A549 (cell line): ENCODE measurements at regions of chr11 and their contacts with region 1.

Region 1: DNA sequence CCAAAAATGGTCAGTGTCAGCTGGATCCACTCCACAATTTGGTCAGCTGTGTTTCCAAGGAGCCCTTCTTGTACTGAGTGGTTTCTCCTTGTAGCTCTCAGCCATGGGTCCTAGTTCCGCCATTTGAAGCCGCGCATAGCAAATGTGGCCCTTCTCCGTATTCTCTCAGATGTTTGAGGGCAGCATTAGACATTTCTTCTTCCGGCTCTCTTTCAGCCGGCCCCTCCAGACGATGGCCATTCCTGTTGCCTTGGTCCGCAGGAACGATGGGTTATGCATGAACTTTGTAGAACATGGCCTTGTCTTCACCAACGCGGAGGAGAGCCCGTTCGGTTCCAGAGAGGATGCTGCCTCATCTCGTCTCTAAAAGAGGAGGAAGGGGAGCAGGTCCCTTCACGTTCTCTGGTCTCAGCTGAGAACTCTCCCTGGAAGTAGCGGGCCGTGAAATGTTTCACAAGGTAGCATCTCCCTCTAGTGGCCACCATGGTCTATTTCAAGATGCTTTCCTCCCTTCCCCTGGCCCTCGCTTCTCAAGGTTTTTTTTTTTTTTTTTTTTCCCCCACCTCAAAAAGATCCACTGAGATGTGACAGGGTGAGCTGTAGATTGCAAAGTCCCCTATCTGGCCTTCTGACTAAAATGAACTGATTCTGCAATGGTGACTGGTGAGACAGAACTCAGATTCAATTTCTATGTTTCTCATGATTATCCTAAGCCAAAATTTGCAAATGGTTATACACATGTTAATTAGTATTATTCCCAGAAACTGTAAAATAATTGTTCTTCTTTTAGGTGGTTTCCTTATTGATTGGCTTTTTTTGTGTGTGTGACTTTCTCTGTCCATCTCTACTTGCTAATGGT is 19.8 kb upstream of the PLET1 start:
- DNase-seq: peak; percentile 68 to 79
- ATAC-seq: peak; percentile 86 to 96
- H3K4me3 ChIP-seq: peak overlapping the region; percentile 52
- H3K27ac ChIP-seq: peak overlapping the region; percentile 66 to 78
- H3K4me1 ChIP-seq: no peaks in the 10 kb centered on the region
- CTCF ChIP-seq: peak; percentile 45
- EP300 ChIP-seq: no peak
- POLR2A ChIP-seq: no peak
- RAD21 ChIP-seq: peak; percentile 60 to 75

Region 2: GRCh38 chr11:112231952-112232351 is 48.5 kb before region 1 on chr11:
- CTCF ChIA-PET with region 1: interaction called, 247 read pairs
- POLR2A ChIA-PET with region 1: no interaction called
- DNase-seq: no peak
- ATAC-seq: no peak
- H3K4me3 ChIP-seq: no peak overlapping the region
- H3K27ac ChIP-seq: no peak overlapping the region
- H3K4me1 ChIP-seq: peaks cover 12% of the 10 kb centered on the region
- CTCF ChIP-seq: no peak
- EP300 ChIP-seq: no peak
- POLR2A ChIP-seq: no peak
- RAD21 ChIP-seq: no peak

Region 3: GRCh38 chr11:112265721-112266409 is 14.6 kb before region 1 on chr11:
- CTCF ChIA-PET with region 1: interaction called, 38 read pairs
- POLR2A ChIA-PET with region 1: no interaction called
- DNase-seq: no peak
- ATAC-seq: no peak
- H3K4me3 ChIP-seq: no peak overlapping the region
- H3K27ac ChIP-seq: no peak overlapping the region
- H3K4me1 ChIP-seq: no peaks in the 10 kb centered on the region
- CTCF ChIP-seq: no peak
- EP300 ChIP-seq: no peak
- POLR2A ChIP-seq: no peak
- RAD21 ChIP-seq: no peak